ENCODE measurements at regions of chr12 and their contacts with region 1.

Region 1: DNA sequence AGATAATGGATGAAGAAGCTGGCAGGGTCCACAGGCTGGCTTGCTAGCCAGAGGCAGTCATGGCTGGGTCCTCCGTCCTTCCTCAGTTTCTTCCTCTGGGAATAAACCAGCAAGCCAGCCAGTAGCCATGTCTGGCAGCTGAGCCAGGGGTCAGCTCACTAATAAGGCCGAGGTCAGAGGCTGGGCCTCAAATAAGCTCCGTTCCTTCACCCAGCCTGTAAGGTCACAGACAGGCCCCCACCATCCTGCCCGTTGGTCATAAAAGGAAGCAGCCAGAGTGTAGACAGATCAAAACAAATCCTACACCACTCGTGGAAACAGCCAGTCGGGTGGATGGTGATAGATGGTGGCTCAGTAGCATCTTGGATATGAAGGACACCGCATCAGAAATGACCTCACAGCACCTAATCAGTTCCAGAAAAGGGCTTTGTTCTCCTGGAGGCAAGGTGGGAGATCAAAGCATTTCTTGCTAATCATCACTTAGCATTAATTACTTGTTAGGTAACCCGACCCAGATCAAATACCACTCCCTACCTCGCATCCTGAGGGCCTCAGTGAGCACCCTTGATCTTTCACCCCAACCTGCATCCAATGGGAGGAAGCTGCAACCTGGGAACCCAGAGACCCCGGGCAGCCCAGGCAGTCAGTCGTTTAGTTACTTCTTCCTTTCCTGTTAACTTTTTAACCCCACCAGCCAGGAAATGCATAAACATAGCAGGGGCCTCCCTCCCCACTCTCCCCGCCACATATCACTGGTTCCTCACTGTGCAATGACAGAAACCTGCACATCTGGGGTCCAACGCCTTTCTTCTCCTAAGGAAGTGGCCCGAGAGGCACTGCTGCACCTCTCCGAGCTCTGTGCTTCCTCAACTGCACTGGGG is 90.2 kb downstream of the KDM2B start:
- DNase-seq: no peak
- ATAC-seq: peak in 3 of 4 experiments; percentile 16 to 38 (median 24)
- H3K4me3 ChIP-seq: no peak overlapping the region
- H3K4me3 Mint-ChIP-seq: peak overlapping the region in 1 of 3 donors; percentile 11
- H3K27ac ChIP-seq: no peak overlapping the region
- H3K27ac Mint-ChIP-seq: peak overlapping the region in 1 of 2 donors; percentile 34
- H3K4me1 ChIP-seq: peaks cover 11 to 23% of the 10 kb centered on the region in 2 experiments
- H3K4me1 Mint-ChIP-seq: peaks cover 14 to 21% (median 18%) of the 10 kb centered on the region in 3 donors
- H3K27me3 ChIP-seq: no peaks in the 10 kb centered on the region
- H3K27me3 Mint-ChIP-seq: no peaks in the 10 kb centered on the region

Region 2: DNA sequence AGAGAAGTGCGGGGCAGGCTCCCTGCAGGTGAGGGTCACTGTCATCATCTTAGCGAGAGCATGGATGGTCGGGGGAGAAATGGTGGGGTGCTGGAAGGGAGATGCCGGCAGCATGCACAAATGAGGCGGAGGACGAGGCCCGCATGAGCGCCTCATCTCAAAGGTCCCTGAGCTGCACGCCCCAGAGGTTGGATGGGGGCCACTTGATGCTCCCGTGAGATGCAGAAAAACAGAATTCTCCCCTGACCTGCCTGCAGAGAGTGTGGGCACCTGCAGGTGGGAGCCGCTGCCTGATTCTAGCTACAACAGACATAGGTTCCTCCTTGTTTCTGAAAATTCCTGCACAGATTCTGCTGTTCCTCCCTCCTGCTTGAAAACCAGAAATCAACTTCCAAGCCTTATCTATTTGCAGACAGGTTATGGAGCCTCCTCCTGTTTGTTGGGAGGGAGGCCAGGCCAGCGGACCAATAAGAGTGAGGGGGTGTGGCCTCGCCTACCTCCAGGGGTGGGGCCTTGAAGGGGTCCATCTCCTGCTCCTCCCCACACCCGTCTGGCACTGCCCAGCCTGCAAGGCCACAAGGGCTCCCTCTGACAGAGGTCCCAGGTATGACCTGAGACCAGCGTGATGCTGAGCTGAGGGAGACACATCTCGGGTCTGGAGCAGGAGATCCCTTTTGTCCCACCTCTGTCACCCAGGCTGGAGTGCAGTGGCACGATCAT is 23.0 kb after region 1 on chr12:
- CTCF ChIA-PET with region 1: no interaction called
- POLR2A ChIA-PET with region 1: interaction called in 1 of 2 experiments, 10 read pairs
- DNase-seq: no peak
- ATAC-seq: peak in 3 of 4 experiments; percentile 27 to 50 (median 42)
- H3K4me3 ChIP-seq: no peak overlapping the region
- H3K4me3 Mint-ChIP-seq: peak overlapping the region in 1 of 3 donors; percentile 3
- H3K27ac ChIP-seq: peak overlapping the region; percentile 8
- H3K27ac Mint-ChIP-seq: peak overlapping the region; percentile 86
- H3K4me1 ChIP-seq: peaks cover 4 to 9% of the 10 kb centered on the region in 2 experiments
- H3K4me1 Mint-ChIP-seq: peaks cover 12 to 13% (median 12%) of the 10 kb centered on the region in 3 donors
- H3K27me3 ChIP-seq: no peaks in the 10 kb centered on the region
- H3K27me3 Mint-ChIP-seq: no peaks in the 10 kb centered on the region

Region 3: DNA sequence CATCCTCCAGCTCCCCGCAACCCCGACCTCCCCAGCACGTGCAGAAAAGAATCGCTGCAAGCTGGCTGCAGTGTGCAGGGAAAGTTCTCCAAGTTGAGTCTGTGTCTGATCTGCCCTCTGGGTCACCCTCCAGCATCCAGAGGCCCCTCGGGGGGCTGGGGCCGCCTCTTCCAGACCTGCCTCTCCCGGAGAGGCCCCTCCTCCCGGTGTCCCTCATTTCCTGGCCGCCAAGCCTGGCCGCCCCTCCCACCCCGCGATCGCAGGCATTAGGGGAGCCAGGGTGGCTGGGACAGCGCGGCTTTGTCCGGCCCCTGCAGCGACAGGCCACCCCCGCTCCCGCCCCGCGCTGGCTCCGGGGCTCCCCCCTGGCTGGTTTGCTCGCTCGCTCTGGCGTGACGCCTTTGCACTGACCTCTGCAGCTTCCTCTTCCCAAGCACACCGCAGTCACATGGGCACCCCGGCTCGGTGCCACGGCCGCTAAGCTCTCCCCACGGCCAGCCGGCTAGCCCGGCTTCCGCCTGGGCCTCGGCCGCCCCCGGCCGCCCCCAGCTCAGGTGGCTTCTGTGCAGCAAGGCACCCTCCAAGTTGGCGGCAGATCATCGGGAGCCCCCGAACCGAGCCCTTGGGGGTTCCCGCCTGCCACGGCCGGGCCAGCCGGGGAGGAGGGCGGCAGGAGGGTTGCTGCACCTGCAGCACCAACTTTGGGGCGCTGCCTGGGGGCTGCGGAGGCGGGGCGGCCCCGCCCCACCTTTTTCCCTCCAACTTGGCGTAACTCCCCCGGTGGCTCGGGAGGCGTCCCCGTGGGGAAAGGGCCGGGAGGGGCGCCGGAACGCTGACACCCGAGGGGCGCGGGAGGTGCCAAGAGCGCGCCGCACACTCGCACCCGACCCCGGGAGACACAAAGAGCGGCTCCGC is 46.5 kb after region 1 on chr12:
- CTCF ChIA-PET with region 1: no interaction called
- POLR2A ChIA-PET with region 1: no interaction called
- DNase-seq: peak in 32 of 35 experiments; percentile 17 to 72 (median 41)
- ATAC-seq: peak; percentile 9 to 35 (median 22)
- H3K4me3 ChIP-seq: peak overlapping the region; percentile 41 to 68
- H3K4me3 Mint-ChIP-seq: peak overlapping the region; percentile 76 to 84 (median 78)
- H3K27ac ChIP-seq: peak overlapping the region; percentile 94
- H3K27ac Mint-ChIP-seq: peak overlapping the region; percentile 96 to 97
- H3K4me1 ChIP-seq: peaks cover 4 to 53% of the 10 kb centered on the region in 2 experiments
- H3K4me1 Mint-ChIP-seq: peaks cover 40 to 52% (median 44%) of the 10 kb centered on the region in 3 donors
- H3K27me3 ChIP-seq: no peaks in the 10 kb centered on the region
- H3K27me3 Mint-ChIP-seq: no peaks in the 10 kb centered on the region